ENCODE measurements at regions of chr14 and their contacts with region 1.

Region 1: GRCh38 chr14:45810152-45810872 is 557.3 kb upstream of the MIS18BP1 start:
- DNase-seq: peak; percentile 21
- ATAC-seq: peak; percentile 76
- H3K4me3 ChIP-seq: no peak overlapping the region
- H3K27ac ChIP-seq: peak overlapping the region; percentile 12; the same call in 1 of the 2 replicates
- H3K4me1 ChIP-seq: no peaks in the 10 kb centered on the region
- H3K27me3 ChIP-seq: no peaks in the 10 kb centered on the region
- CTCF ChIP-seq: peak; percentile 16 to 20 (median 19); a peak in 3 of 6 replicates
- EP300 ChIP-seq: no peak
- POLR2A ChIP-seq: no peak
- RAD21 ChIP-seq: peak; percentile 36; the same call in 1 of the 2 replicates

Region 2: DNA sequence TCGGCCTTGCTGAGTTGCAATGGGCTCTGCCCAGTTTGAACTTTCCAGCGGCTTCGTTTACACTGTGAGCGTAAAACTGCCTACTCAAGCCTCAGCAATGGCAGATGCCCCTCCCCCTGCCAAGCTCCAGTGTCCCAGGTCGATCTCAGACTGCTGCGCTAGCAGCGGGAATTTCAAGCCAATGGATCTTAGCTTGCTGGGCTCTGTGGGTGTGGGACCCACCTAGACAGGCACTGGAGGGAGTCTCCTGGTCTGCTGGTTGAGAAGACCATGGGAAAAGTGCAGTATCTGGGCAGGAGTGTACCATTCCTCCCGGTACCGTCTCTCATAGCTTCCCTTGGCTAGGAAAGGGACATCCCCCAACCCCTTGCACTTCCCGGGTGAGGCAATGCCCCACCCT is 936.8 kb before region 1 on chr14:
- CTCF ChIA-PET with region 1: no interaction called
- POLR2A ChIA-PET with region 1: no interaction called
- RAD21 ChIA-PET with region 1: no interaction called
- SMC1A ChIA-PET with region 1: no interaction called
- in situ Hi-C with region 1: no loop called
- intact Hi-C with region 1: no loop called
- DNase-seq: no peak
- ATAC-seq: no peak
- H3K4me3 ChIP-seq: no peak overlapping the region
- H3K27ac ChIP-seq: no peak overlapping the region
- H3K4me1 ChIP-seq: no peaks in the 10 kb centered on the region
- H3K27me3 ChIP-seq: no peaks in the 10 kb centered on the region
- CTCF ChIP-seq: no peak
- EP300 ChIP-seq: no peak
- POLR2A ChIP-seq: no peak
- RAD21 ChIP-seq: no peak

Region 3: DNA sequence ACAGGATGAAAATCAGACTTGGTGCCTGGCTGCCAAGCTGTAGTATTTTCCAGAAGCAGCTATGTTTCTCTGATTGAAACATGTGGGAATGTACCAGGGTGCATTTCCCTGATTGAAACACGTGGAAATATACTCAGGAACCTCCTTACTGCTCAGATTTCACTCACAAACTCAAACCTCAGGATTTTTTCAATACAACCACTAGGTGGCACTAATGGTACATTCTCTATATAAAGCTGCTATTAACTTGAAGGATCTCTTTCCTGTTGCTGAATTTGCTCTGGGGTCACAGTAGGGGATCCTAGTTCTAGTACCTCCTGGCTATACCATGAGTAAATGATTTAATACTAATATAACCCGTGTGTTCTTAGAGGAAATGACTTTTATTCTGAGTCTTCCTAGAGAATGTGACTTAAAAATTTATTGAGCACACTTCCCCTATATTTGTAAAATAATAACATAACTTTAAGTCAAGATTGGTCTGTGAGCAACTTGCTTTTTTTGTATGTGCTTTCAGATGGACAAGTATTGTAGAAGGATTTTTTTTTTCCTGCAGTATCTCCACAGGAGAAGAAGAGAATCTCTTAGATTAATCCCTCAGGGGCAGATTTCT is 383.5 kb before region 1 on chr14:
- CTCF ChIA-PET with region 1: no interaction called
- POLR2A ChIA-PET with region 1: no interaction called
- RAD21 ChIA-PET with region 1: no interaction called
- SMC1A ChIA-PET with region 1: no interaction called
- in situ Hi-C with region 1: no loop called
- intact Hi-C with region 1: no loop called
- DNase-seq: peak; percentile 4
- ATAC-seq: peak; percentile 77
- H3K4me3 ChIP-seq: no peak overlapping the region
- H3K27ac ChIP-seq: no peak overlapping the region
- H3K4me1 ChIP-seq: no peaks in the 10 kb centered on the region
- H3K27me3 ChIP-seq: no peaks in the 10 kb centered on the region
- CTCF ChIP-seq: peak; percentile 46 to 60 (median 52); a peak in 5 of 6 replicates
- EP300 ChIP-seq: no peak
- POLR2A ChIP-seq: no peak
- RAD21 ChIP-seq: peak; percentile 76

Region 4: GRCh38 chr14:45698462-45699134 is 111.7 kb before region 1 on chr14:
- CTCF ChIA-PET with region 1: interaction called, 23 read pairs
- POLR2A ChIA-PET with region 1: no interaction called
- RAD21 ChIA-PET with region 1: interaction called, 29 read pairs
- SMC1A ChIA-PET with region 1: interaction called, 19 read pairs
- in situ Hi-C with region 1: no loop called
- intact Hi-C with region 1: no loop called
- DNase-seq: no peak
- ATAC-seq: no peak
- H3K4me3 ChIP-seq: no peak overlapping the region
- H3K27ac ChIP-seq: no peak overlapping the region
- H3K4me1 ChIP-seq: no peaks in the 10 kb centered on the region
- H3K27me3 ChIP-seq: no peaks in the 10 kb centered on the region; a peak in 1 of 4 replicates
- CTCF ChIP-seq: no peak
- EP300 ChIP-seq: no peak
- POLR2A ChIP-seq: no peak
- RAD21 ChIP-seq: no peak

Region 5: GRCh38 chr14:45716572-45716971 is 93.7 kb before region 1 on chr14:
- CTCF ChIA-PET with region 1: interaction called, 8 read pairs
- POLR2A ChIA-PET with region 1: no interaction called
- RAD21 ChIA-PET with region 1: interaction called, 10 read pairs
- SMC1A ChIA-PET with region 1: interaction called, 37 read pairs
- in situ Hi-C with region 1: no loop called
- intact Hi-C with region 1: no loop called
- DNase-seq: no peak
- ATAC-seq: no peak; the same call in 2 of the 3 replicates
- H3K4me3 ChIP-seq: no peak overlapping the region
- H3K27ac ChIP-seq: no peak overlapping the region
- H3K4me1 ChIP-seq: no peaks in the 10 kb centered on the region
- H3K27me3 ChIP-seq: no peaks in the 10 kb centered on the region
- CTCF ChIP-seq: no peak
- EP300 ChIP-seq: no peak
- POLR2A ChIP-seq: no peak
- RAD21 ChIP-seq: no peak

Region 6: GRCh38 chr14:45798659-45799058 is 11.7 kb before region 1 on chr14:
- CTCF ChIA-PET with region 1: interaction called, 3 read pairs
- POLR2A ChIA-PET with region 1: no interaction called
- RAD21 ChIA-PET with region 1: interaction called, 15 read pairs
- SMC1A ChIA-PET with region 1: interaction called, 6 read pairs
- in situ Hi-C with region 1: no loop called
- intact Hi-C with region 1: no loop called
- DNase-seq: no peak
- ATAC-seq: no peak
- H3K4me3 ChIP-seq: no peak overlapping the region
- H3K27ac ChIP-seq: no peak overlapping the region
- H3K4me1 ChIP-seq: no peaks in the 10 kb centered on the region
- H3K27me3 ChIP-seq: no peaks in the 10 kb centered on the region
- CTCF ChIP-seq: no peak
- EP300 ChIP-seq: no peak
- POLR2A ChIP-seq: no peak
- RAD21 ChIP-seq: no peak

Region 7: GRCh38 chr14:45902241-45902640 is 91.9 kb after region 1 on chr14:
- CTCF ChIA-PET with region 1: no interaction called
- POLR2A ChIA-PET with region 1: no interaction called
- RAD21 ChIA-PET with region 1: no interaction called
- SMC1A ChIA-PET with region 1: no interaction called
- in situ Hi-C with region 1: no loop called
- intact Hi-C with region 1: no loop called
- DNase-seq: no peak
- ATAC-seq: no peak
- H3K4me3 ChIP-seq: no peak overlapping the region
- H3K27ac ChIP-seq: no peak overlapping the region
- H3K4me1 ChIP-seq: peaks cover 4% of the 10 kb centered on the region; the same call in 1 of the 2 replicates
- H3K27me3 ChIP-seq: no peaks in the 10 kb centered on the region
- CTCF ChIP-seq: no peak
- EP300 ChIP-seq: no peak
- POLR2A ChIP-seq: no peak
- RAD21 ChIP-seq: no peak